ENCODE measurements at regions of chr7 and their contacts with region 1.

Region 1: DNA sequence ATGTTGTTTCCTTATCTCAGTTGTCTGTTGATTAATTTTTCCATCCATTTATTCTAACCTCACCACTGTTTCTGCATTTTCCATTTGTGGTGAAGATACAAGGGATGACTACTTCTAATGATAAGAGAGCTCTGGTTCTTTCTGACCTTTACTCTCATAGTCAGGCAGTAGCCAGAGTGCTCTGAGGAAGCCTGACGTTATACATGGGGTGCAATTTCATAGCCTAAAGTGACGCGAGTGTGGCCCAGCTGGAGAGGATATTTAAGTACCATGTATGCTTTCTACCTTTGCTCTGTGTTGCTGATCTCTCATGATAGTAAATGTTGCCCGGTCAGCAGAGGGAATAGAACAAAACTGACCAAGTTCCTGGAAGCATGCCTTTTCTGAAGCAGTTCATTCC is 33.9 kb upstream of the CYCS start:
- DNase-seq: no peak
- ATAC-seq: no peak
- H3K4me3 ChIP-seq: no peak overlapping the region
- H3K27ac ChIP-seq: no peak overlapping the region
- H3K4me1 ChIP-seq: no peaks in the 10 kb centered on the region
- H3K27me3 ChIP-seq: no peaks in the 10 kb centered on the region
- CTCF ChIP-seq: no peak
- EP300 ChIP-seq: no peak
- POLR2A ChIP-seq: no peak
- RAD21 ChIP-seq: no peak

Region 2: DNA sequence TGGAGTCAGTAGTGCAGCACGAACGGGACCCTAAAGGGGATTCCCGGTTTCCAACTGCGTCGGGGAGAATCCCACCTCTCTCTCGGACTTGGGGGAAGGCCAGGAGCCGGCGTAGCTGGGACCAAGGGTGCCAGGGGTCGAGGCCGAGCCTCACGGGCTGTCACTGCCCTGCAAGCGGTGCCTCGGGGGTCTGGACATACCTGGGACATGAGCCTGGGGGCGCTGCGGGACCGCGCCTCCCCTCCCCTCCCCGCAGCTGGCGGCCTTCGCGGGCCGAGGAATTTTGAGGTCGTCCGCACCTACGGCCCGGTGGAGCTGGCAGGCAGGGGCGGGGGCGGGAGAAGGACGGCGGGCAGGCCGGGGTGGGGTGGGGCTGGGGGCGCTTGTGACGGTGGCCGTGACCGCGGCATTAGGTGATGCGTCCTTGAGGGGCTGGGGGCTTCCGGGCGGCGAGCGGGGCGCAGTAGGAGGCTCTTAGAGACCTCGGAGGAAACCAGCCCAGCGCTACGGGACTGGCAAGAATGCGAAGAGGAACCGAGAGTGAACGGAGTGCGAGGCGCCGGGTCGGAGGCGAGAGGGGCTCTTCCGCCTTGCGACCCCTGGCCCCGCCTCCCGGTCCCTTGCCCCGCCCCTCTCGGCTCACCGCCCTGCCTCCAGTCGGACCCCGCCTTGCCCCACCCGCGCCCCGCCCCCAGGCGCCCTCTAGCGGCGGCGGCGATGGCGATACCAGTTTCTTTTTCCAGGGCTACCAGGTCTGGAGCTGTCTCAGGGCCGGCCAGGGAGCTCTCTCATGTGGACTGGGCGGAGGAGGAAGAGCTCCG is 21.0 kb after region 1 on chr7:
- CTCF ChIA-PET with region 1: interaction called, 10 read pairs
- POLR2A ChIA-PET with region 1: no interaction called
- RAD21 ChIA-PET with region 1: no interaction called
- SMC1A ChIA-PET with region 1: interaction called, 3 read pairs
- in situ Hi-C with region 1: no loop called
- intact Hi-C with region 1: no loop called
- DNase-seq: peak; percentile 77
- ATAC-seq: peak; percentile 98
- H3K4me3 ChIP-seq: peak overlapping the region; percentile 89
- H3K27ac ChIP-seq: peak overlapping the region; percentile 58
- H3K4me1 ChIP-seq: no peaks in the 10 kb centered on the region
- H3K27me3 ChIP-seq: no peaks in the 10 kb centered on the region
- CTCF ChIP-seq: peak; percentile 60 to 80 (median 71)
- EP300 ChIP-seq: no peak
- POLR2A ChIP-seq: peak; percentile 97
- RAD21 ChIP-seq: 0 out of 2 replicates have a peak, but pooled peaks have one; percentile 8